Endothelial cell of umbilical vein (primary cell): ENCODE measurements at regions of chr20 and their contacts with region 1.

Region 1: GRCh38 chr20:41299899-41300298 is 17.6 kb downstream of the ZHX3 start:
- DNase-seq: no peak
- H3K4me3 ChIP-seq: no peak overlapping the region
- H3K27ac ChIP-seq: no peak overlapping the region
- H3K4me1 ChIP-seq: peaks cover 16% of the 10 kb centered on the region
- H3K27me3 ChIP-seq: no peaks in the 10 kb centered on the region
- CTCF ChIP-seq: no peak
- POLR2A ChIP-seq: no peak

Region 2: DNA sequence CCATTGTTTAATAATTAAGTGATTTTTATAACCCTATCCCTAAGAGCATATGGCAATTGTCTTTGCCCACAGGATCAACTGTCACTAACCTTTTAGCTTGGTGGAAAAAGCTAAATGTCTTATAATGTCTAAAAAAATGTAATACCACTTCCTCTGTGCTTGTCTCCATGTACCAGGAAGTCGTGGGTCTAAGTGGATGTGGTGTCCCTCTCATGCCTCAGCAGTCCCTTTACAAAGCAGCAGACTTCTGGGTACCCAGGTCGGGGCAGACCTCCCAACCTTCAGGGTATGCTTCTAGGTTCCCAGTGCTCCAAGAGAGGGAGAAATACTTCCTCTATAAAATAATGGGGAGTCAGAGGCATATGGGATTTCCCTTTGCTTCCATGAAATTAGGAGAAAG is 57.1 kb before region 1 on chr20:
- CTCF ChIA-PET with region 1: no interaction called
- POLR2A ChIA-PET with region 1: no interaction called
- dilution Hi-C with region 1: no loop called
- intact Hi-C with region 1: no loop called
- DNase-seq: no peak
- H3K4me3 ChIP-seq: no peak overlapping the region
- H3K27ac ChIP-seq: no peak overlapping the region
- H3K4me1 ChIP-seq: peaks cover 27% of the 10 kb centered on the region
- H3K27me3 ChIP-seq: no peaks in the 10 kb centered on the region
- CTCF ChIP-seq: no peak
- POLR2A ChIP-seq: no peak

Region 3: DNA sequence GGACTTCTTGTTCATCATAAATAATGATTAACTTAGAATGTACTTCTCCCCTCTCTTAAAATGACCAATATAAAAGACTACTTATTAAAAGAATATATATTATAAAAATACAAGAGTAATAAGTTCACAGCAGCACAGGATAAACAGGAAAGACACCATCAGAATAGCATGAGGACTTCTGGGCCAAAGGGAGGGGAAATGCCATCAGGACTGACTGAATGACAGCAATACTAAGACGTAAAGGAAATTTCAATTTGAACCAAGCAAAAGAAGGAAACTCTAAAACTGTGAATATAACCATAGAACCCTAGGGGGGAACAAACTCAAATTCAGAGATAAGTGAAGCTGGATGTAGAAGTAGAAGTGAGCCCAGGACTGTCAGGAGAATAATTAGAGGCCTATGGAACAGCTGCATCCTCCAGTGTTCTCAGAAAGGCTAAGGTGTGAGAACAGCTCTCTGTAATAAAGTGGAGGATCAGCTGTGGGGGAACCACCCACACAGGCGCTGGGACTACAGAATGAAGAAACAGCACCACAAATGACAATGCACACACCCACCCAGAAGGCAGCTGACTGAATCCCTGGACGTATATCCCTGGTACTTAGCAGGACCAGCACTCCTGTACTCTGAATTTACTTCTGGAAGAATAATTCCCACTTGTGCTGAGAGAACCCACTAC is 20.2 kb before region 1 on chr20:
- CTCF ChIA-PET with region 1: interaction called, 7 read pairs
- POLR2A ChIA-PET with region 1: no interaction called
- dilution Hi-C with region 1: no loop called
- intact Hi-C with region 1: loop called (anchors 2 kb)
- DNase-seq: peak; percentile 30
- H3K4me3 ChIP-seq: no peak overlapping the region
- H3K27ac ChIP-seq: no peak overlapping the region
- H3K4me1 ChIP-seq: peaks cover 10% of the 10 kb centered on the region
- H3K27me3 ChIP-seq: no peaks in the 10 kb centered on the region
- CTCF ChIP-seq: no peak
- POLR2A ChIP-seq: no peak